GM23248 (cell line): ENCODE measurements at regions of chr6 and their contacts with region 1.

Region 1: GRCh38 chr6:148166339-148166968 is 176.2 kb upstream of the SASH1 start:
- DNase-seq: peak; percentile 69
- H3K4me3 ChIP-seq: no peak overlapping the region
- H3K27ac ChIP-seq: no peak overlapping the region
- H3K4me1 ChIP-seq: no peaks in the 10 kb centered on the region
- H3K27me3 ChIP-seq: no peaks in the 10 kb centered on the region

Region 2: DNA sequence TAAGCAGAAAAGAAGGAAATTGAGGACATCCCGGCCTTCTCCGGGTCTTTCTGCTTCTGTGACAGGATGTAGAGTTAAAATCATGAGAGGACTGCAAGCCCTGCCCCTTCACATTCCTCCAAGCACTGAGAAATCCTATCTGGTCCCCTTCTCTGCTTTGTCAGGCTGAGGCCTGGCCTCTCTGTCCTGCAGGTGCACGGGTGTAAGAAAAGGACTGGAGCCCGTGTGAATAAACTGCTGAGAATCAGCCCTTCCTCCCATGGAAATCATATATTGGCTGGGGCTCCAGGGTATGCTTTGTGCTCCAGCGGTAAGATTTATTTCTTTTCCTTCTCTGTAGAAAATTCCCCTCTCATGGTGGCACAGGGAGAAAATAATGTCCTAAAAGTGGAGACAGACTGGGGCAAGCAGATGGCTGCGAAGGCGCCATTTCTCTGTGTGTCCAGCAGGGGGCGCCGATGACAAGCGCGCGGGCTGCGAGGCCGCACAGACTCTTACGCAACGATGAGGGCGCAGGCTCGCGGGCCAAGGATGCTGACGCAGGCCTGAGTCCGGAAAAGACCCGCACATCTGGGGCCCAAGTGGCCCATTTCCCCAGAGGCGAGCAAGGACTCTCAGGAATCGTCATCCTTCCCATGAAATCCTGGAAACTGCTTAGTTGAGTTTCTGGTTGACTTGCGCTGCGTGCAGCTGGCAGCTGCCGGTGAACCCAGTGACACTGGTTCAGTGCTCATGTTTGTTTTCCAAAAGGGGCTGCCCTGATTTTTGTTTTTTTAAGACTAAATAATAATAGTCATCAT is 1309.1 kb before region 1 on chr6:
- in situ Hi-C with region 1: loop called (anchors 25 kb)
- DNase-seq: peak; percentile 97
- H3K4me3 ChIP-seq: peak overlapping the region; percentile 63
- H3K27ac ChIP-seq: peak overlapping the region; percentile 73
- H3K4me1 ChIP-seq: peaks cover 7% of the 10 kb centered on the region
- H3K27me3 ChIP-seq: no peaks in the 10 kb centered on the region

Region 3: DNA sequence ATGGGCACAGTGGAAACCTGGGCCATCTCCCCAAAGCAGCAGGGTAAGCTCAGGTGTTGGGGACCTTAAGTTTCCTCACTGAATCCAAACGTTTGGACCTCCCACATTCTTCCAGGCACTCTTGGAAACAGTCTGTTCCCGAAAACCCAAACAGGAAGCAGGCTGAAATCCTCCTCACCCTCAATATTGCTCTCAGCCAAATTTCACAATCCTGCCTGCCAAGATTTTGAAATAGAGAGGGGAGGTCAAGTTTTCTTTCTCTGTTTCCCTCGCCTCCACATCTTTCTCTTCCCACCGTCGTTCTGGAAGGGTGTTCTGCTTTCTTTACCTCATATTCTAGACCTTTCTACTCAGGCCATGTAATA is 215.8 kb before region 1 on chr6:
- in situ Hi-C with region 1: no loop called
- DNase-seq: no peak
- H3K4me3 ChIP-seq: no peak overlapping the region
- H3K27ac ChIP-seq: no peak overlapping the region
- H3K4me1 ChIP-seq: no peaks in the 10 kb centered on the region
- H3K27me3 ChIP-seq: no peaks in the 10 kb centered on the region